GM10248 (cell line): ENCODE measurements at regions of chr4 and their contacts with region 1.

Region 1: GRCh38 chr4:25330905-25331808 is 18.6 kb downstream of the ZCCHC4 start:
- DNase-seq: peak; percentile 35
- CTCF ChIP-seq: no peak

Region 2: GRCh38 chr4:24856586-24856985 is 474.6 kb before region 1 on chr4:
- CTCF ChIA-PET with region 1: no interaction called
- POLR2A ChIA-PET with region 1: no interaction called
- DNase-seq: peak; percentile 68
- CTCF ChIP-seq: no peak

Region 3: GRCh38 chr4:25271866-25272265 is 59.3 kb before region 1 on chr4:
- CTCF ChIA-PET with region 1: no interaction called
- POLR2A ChIA-PET with region 1: no interaction called
- DNase-seq: no peak
- CTCF ChIP-seq: no peak

Region 4: GRCh38 chr4:25284466-25284865 is 46.7 kb before region 1 on chr4:
- CTCF ChIA-PET with region 1: no interaction called
- POLR2A ChIA-PET with region 1: no interaction called
- DNase-seq: no peak
- CTCF ChIP-seq: no peak

Region 5: GRCh38 chr4:25320773-25321172 is 10.4 kb before region 1 on chr4:
- CTCF ChIA-PET with region 1: interaction called, 12 read pairs
- POLR2A ChIA-PET with region 1: no interaction called
- DNase-seq: peak; percentile 42
- CTCF ChIP-seq: no peak

Region 6: GRCh38 chr4:25351777-25352416 is 20.7 kb after region 1 on chr4:
- CTCF ChIA-PET with region 1: interaction called, 12 read pairs
- POLR2A ChIA-PET with region 1: no interaction called
- DNase-seq: no peak
- CTCF ChIP-seq: no peak

Region 7: DNA sequence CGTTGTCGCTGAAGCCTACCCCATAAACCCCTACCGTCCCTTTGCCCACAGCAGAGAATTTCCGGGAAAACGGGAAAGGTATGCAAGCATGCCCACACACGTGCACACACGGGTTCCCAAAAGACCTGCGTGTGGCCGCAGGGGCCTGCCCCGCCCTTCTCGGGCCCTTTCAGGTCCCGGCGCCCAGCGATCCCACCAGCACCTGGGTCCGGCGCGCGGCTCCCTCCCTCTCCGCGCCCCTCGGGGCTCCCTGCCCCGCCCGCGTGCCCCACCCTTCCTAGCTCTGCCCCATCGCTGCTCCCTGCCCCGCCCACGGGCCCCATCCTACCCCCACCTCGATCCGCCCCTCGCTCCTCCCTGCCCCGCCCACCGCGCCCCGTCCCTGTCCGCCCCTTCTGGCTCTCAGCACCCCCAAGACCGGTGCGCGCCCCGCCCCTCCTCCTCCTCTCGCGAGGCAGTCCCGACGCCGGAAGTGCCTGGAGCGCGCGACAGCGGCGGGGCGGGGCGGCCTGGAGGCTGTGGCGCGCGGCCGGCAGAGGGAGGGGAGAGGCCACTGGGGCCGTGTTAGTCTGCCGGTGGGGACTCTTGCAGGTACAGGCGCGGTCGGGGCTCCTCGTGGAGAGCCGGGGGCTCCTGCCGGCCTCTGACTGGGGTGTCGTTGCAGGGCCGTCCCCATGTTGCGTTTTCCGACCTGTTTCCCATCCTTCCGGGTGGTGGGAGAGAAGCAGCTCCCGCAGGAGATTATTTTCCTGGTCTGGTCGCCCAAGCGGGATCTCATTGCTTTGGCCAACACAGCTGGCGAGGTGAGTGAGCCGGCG is 45.8 kb after region 1 on chr4 and contains the start of gene ANAPC4:
- CTCF ChIA-PET with region 1: no interaction called
- POLR2A ChIA-PET with region 1: no interaction called
- DNase-seq: peak; percentile 100
- CTCF ChIP-seq: no peak